Activated CD4-positive, alpha-beta T cell treated with anti-CD3 and anti-CD28 coated beads for 36 hours (primary cell): ENCODE measurements at regions of chr11 and their contacts with region 1.

Region 1: DNA sequence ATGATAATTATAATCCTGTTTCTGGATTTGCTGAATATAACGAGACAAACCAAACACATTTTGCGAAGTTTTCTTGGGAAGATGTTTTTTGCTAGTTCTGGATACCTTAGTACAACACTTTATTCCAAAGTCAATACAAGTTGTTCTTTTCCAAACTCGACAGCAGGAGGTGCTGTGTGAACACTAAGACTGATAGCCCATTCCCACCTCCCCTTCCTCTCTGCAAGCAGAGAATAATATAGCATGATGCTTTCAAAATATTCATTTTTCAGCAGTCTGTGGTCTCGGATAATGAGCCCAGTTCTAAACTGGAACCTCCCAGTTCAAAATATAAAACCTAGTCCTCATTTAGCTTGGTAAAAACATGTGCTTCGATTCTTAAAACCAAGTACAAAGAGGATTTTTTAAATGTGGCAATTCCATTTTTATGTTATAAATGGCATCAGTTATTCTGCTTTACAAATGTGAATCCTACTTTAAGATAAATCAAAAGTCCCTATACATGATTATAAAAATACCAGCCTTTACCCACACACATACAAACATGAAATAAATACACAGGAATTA is 129.1 kb downstream of the DCDC1 start:
- DNase-seq: peak; percentile 30
- ATAC-seq: no peak
- H3K4me3 Mint-ChIP-seq: no peak overlapping the region
- H3K27ac Mint-ChIP-seq: no peak overlapping the region
- H3K4me1 Mint-ChIP-seq: no peaks in the 10 kb centered on the region
- H3K27me3 Mint-ChIP-seq: peaks cover 3% of the 10 kb centered on the region

Region 2: GRCh38 chr11:31107062-31107461 is 133.4 kb before region 1 on chr11:
- CTCF ChIA-PET with region 1: interaction called, 15 read pairs
- POLR2A ChIA-PET with region 1: no interaction called
- intact Hi-C with region 1: no loop called
- DNase-seq: peak; percentile 75
- ATAC-seq: peak; percentile 57
- H3K4me3 Mint-ChIP-seq: no peak overlapping the region
- H3K27ac Mint-ChIP-seq: no peak overlapping the region
- H3K4me1 Mint-ChIP-seq: no peaks in the 10 kb centered on the region
- H3K27me3 Mint-ChIP-seq: peaks cover 2% of the 10 kb centered on the region

Region 3: DNA sequence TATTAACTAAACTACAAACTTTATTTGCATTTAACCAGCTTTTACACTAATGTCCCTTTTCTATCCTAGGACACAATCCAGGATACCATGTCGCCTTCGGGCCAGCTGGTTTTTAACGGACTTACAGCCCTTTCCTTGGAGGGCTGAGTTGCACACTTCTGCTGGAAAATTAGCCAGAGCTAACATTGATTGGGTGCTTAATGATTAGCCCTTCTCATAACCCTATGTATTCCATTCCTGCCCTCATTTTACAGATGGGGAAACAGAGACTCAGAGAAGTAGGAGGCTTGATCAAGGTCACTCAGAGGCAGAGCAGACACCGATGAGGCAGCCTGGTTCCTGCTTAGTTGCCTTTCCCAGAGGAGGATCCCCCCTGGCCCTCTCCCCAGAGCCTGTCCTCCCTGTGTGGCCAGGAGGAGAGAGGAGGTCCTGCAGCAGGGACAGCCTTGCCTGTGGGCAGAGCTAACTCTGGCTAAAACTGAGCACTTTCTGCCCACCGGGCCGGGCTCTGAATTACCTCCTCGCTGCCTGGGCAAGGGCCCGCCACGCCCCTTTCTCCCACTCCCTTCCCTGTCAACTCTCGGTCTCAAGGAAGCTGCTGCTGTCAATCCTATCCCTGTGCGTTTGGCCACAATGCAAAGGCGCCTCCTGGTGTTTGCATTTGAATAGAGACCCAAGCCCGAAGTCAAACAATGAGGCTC is 630.3 kb after region 1 on chr11:
- CTCF ChIA-PET with region 1: interaction called, 10 read pairs
- POLR2A ChIA-PET with region 1: no interaction called
- intact Hi-C with region 1: loop called (anchors 2 kb)
- DNase-seq: peak; percentile 48
- ATAC-seq: no peak
- H3K4me3 Mint-ChIP-seq: no peak overlapping the region
- H3K27ac Mint-ChIP-seq: no peak overlapping the region
- H3K4me1 Mint-ChIP-seq: no peaks in the 10 kb centered on the region
- H3K27me3 Mint-ChIP-seq: peaks cover 18% of the 10 kb centered on the region

Region 4: GRCh38 chr11:32006799-32007388 is 766.5 kb after region 1 on chr11:
- CTCF ChIA-PET with region 1: interaction called, 3 read pairs
- POLR2A ChIA-PET with region 1: no interaction called
- intact Hi-C with region 1: loop called in 1 of 2 experiments (anchors 5 kb)
- DNase-seq: peak; percentile 24
- ATAC-seq: peak; percentile 65
- H3K4me3 Mint-ChIP-seq: no peak overlapping the region
- H3K27ac Mint-ChIP-seq: no peak overlapping the region
- H3K4me1 Mint-ChIP-seq: no peaks in the 10 kb centered on the region
- H3K27me3 Mint-ChIP-seq: peaks cover 31% of the 10 kb centered on the region

Region 5: DNA sequence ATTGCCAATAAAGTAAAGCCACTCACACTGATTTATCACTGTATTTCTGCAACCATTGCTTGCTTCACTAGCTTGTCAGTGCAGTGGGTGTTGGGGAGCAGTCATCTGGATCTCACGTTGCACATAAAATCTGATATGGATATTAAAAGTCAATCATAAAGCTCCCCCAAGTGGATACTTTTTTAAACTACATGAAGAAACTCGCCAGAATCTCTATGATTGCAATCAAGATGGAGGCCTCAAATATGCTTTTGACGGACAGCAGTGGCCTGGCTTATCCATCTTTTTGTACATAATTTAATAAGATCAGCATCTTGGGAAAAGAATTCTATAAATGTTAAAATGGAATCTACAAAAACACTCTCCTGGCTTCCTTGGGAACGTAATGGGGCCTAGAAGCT is 1057.2 kb after region 1 on chr11:
- CTCF ChIA-PET with region 1: no interaction called
- POLR2A ChIA-PET with region 1: no interaction called
- intact Hi-C with region 1: loop called in 1 of 2 experiments (anchors 2 kb)
- DNase-seq: peak; percentile 13
- ATAC-seq: peak; percentile 51
- H3K4me3 Mint-ChIP-seq: no peak overlapping the region
- H3K27ac Mint-ChIP-seq: no peak overlapping the region
- H3K4me1 Mint-ChIP-seq: no peaks in the 10 kb centered on the region
- H3K27me3 Mint-ChIP-seq: no peaks in the 10 kb centered on the region